CD4-positive, alpha-beta T cell (primary cell): ENCODE measurements at regions of chr5 and their contacts with region 1.

Region 1: DNA sequence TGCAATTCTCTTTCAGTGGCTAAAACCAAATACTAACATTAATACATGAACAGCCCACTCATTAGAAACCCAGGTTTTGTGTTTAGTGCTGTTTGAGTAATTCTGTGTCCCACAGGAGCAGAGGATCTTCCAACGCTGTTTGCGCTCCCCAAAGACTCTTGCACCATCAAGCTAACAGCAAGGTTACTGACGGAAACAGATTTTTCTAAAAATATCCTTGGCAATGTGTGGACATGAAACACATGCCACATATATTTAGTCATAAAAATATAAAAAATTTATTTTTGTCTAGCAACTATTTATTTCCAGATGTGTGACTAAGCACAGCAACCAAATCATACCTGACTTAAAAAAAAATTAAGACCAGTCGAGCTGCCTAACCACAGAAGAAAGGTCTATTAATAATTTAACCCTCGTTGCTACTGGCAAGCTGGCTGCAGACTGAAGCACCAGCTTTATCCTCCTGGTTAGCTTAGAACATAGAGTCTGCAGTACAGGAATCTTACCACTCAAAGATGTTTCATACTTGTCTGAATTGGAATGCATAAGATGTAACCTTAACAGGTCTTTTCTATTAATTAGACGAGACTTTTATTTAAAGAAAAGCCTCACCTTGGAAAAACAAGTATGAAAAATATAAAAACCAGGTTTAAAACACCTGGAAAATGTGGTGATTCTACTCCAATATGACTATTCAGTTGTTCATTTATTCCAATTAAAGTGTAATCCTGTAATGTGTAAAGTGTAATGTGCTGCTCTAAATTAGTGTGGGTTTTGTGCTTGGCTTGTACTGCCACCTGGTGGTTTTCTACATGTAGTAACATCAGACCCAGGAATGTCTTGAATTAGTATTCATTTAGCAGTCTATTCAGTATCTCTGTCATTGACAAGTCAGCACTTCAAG is 272.5 kb downstream of the EPB41L4A start:
- DNase-seq: peak; percentile 14 to 81 (median 40)
- ATAC-seq: peak; percentile 94
- H3K4me3 ChIP-seq: no peak overlapping the region
- H3K4me3 Mint-ChIP-seq: no peak overlapping the region
- H3K27ac ChIP-seq: no peak overlapping the region
- H3K27ac Mint-ChIP-seq: no peak overlapping the region
- H3K4me1 ChIP-seq: no peaks in the 10 kb centered on the region
- H3K4me1 Mint-ChIP-seq: no peaks in the 10 kb centered on the region
- H3K27me3 ChIP-seq: peaks cover 0 to under 1% of the 10 kb centered on the region in 2 experiments
- H3K27me3 Mint-ChIP-seq: peaks cover 7% of the 10 kb centered on the region
- CTCF ChIP-seq: peak; percentile 84

Region 2: GRCh38 chr5:111550279-111551020 is 596.1 kb before region 1 on chr5:
- CTCF ChIA-PET with region 1: no interaction called
- POLR2A ChIA-PET with region 1: no interaction called
- intact Hi-C with region 1: loop called (anchors 1 kb)
- DNase-seq: peak; percentile 37 to 83 (median 57)
- ATAC-seq: peak; percentile 90
- H3K4me3 ChIP-seq: no peak overlapping the region
- H3K4me3 Mint-ChIP-seq: no peak overlapping the region
- H3K27ac ChIP-seq: no peak overlapping the region
- H3K27ac Mint-ChIP-seq: no peak overlapping the region
- H3K4me1 ChIP-seq: peaks cover 9% of the 10 kb centered on the region
- H3K4me1 Mint-ChIP-seq: peaks cover 21% of the 10 kb centered on the region
- H3K27me3 ChIP-seq: no peaks in the 10 kb centered on the region
- H3K27me3 Mint-ChIP-seq: peaks cover 3% of the 10 kb centered on the region
- CTCF ChIP-seq: peak; percentile 68

Region 3: GRCh38 chr5:111685971-111686370 is 460.6 kb before region 1 on chr5:
- CTCF ChIA-PET with region 1: no interaction called
- POLR2A ChIA-PET with region 1: no interaction called
- intact Hi-C with region 1: loop called in 1 of 2 experiments (anchors 2 kb)
- DNase-seq: no peak
- ATAC-seq: no peak
- H3K4me3 ChIP-seq: no peak overlapping the region
- H3K4me3 Mint-ChIP-seq: no peak overlapping the region
- H3K27ac ChIP-seq: no peak overlapping the region
- H3K27ac Mint-ChIP-seq: no peak overlapping the region
- H3K4me1 ChIP-seq: no peaks in the 10 kb centered on the region
- H3K4me1 Mint-ChIP-seq: no peaks in the 10 kb centered on the region
- H3K27me3 ChIP-seq: no peaks in the 10 kb centered on the region
- H3K27me3 Mint-ChIP-seq: no peaks in the 10 kb centered on the region
- CTCF ChIP-seq: no peak